Transverse colon (tissue), 4 donors: ENCODE measurements at regions of chr18 and their contacts with region 1.

Region 1: GRCh38 chr18:62838475-62839098 is 123.2 kb downstream of the PHLPP1 start:
- DNase-seq: no peak
- H3K4me3 ChIP-seq: no peak overlapping the region
- H3K27ac ChIP-seq: no peak overlapping the region
- H3K4me1 ChIP-seq: peaks cover 0 to 16% (median 6%) of the 10 kb centered on the region in 4 donors
- H3K27me3 ChIP-seq: no peaks in the 10 kb centered on the region
- CTCF ChIP-seq: no peak
- EP300 ChIP-seq: no peak
- POLR2A ChIP-seq: no peak

Region 2: GRCh38 chr18:62771494-62772270 is 66.9 kb before region 1 on chr18:
- in situ Hi-C with region 1: loop called in 1 of 4 experiments (anchors 10 kb)
- intact Hi-C with region 1: no loop called
- DNase-seq: no peak
- H3K4me3 ChIP-seq: no peak overlapping the region
- H3K27ac ChIP-seq: no peak overlapping the region
- H3K4me1 ChIP-seq: peaks cover 0 to 37% (median 20%) of the 10 kb centered on the region in 4 donors
- H3K27me3 ChIP-seq: no peaks in the 10 kb centered on the region
- CTCF ChIP-seq: no peak
- EP300 ChIP-seq: no peak
- POLR2A ChIP-seq: no peak

Region 3: GRCh38 chr18:62784966-62785413 is 53.6 kb before region 1 on chr18:
- in situ Hi-C with region 1: no loop called
- intact Hi-C with region 1: no loop called
- DNase-seq: no peak
- H3K4me3 ChIP-seq: no peak overlapping the region
- H3K27ac ChIP-seq: peak overlapping the region; percentile 10 to 24 (median 18)
- H3K4me1 ChIP-seq: peaks cover 14 to 59% (median 29%) of the 10 kb centered on the region in 4 donors
- H3K27me3 ChIP-seq: no peaks in the 10 kb centered on the region
- CTCF ChIP-seq: no peak
- EP300 ChIP-seq: no peak
- POLR2A ChIP-seq: no peak